Kidney (tissue), 22 donors: ENCODE measurements at regions of chr2 and their contacts with region 1.

Region 1: GRCh38 chr2:199985625-199986207 is 30.3 kb downstream of the MAIP1 start:
- DNase-seq: peak in 4 of 5 donors; percentile 49 to 82 (median 53)
- H3K4me3 ChIP-seq: no peak overlapping the region
- H3K27ac ChIP-seq: no peak overlapping the region
- H3K4me1 ChIP-seq: no peaks in the 10 kb centered on the region
- H3K27me3 ChIP-seq: no peaks in the 10 kb centered on the region
- CTCF ChIP-seq: peak; percentile 56

Region 2: DNA sequence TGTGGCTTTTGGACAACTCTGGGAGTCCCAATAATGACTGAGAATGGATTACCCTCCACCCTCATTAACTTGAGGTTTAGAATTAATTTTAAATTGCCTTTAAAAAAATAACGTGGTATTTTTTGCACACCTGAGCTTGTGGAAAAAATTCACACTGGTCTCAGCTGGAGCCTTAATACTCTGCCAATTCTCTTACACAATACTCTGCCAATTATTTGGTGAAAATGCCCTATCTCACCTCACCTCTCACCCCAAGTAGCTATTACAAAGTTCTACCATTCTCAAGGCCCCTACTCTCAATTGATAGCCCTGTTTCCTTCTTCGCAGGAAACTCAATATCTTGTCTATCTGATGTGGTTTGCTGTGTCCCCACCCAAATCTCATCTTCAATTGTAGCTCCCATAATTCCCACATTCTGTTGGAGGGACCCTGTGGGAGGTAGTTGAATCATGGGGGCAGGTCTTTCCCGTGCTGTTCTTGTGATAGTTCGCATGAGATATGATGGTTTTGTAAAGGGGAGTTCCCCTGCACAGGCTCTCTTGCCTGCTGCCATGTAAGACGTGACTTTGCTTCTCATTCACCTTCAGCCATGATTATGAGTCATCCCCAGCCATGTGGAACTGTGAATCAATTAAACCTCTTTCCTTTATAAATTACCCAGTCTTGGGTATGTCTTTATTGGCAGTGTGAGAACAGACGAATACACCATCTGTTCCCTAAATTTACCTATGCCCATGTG is 102.1 kb before region 1 on chr2:
- intact Hi-C with region 1: no loop called
- DNase-seq: no peak
- H3K4me3 ChIP-seq: no peak overlapping the region
- H3K27ac ChIP-seq: no peak overlapping the region
- H3K4me1 ChIP-seq: no peaks in the 10 kb centered on the region
- H3K27me3 ChIP-seq: no peaks in the 10 kb centered on the region
- CTCF ChIP-seq: no peak

Region 3: DNA sequence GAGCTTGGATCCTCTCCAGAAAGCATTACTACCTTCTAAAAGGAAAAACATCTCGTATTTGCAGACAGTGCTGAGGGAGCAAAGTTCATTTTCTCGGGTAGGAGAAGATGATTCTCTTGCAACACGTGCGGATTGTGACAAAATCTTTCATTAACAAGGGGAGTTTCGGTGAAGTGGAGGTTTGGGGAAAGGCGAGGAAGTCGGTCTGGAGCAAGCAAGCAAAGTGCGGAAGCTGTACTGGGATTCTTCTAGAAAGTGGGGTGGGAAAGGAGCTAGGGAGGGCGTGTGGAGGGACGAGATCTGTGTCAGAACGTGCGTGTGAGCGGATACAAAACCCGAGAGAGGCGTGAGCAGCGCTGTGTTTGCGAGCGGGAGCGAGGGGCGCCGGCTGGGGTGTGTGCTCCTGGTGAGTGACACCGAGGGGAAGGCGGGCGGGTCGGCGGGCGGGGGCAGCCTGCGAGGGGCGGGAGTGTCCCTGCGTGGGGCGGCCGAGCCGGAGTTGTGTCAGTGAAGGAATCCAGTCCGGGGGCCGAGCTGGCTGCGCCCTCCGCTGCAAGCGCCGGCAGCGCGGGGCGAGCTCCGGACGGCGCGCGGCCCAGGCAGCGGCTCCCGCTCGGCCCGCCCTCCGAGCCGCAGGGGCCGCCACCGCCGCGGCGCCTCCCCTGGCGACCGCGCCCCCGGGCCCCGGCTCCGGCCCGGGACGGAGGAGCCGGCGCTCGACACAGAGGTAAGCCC is 320.6 kb after region 1 on chr2 and contains the start of gene SPATS2L:
- intact Hi-C with region 1: loop called (anchors 10 kb)
- DNase-seq: peak; percentile 83 to 94 (median 88)
- H3K4me3 ChIP-seq: peak within 1 kb of the TSS; percentile 78 to 86 (median 79)
- H3K27ac ChIP-seq: peak within 1 kb of the TSS; percentile 81 to 90
- H3K4me1 ChIP-seq: peaks cover 0 to 7% (median 5%) of the 10 kb centered on the region in 3 donors
- H3K27me3 ChIP-seq: no peaks in the 10 kb centered on the region
- CTCF ChIP-seq: no peak
- total RNA-seq, gene SPATS2L: 166 TPM

Region 4: DNA sequence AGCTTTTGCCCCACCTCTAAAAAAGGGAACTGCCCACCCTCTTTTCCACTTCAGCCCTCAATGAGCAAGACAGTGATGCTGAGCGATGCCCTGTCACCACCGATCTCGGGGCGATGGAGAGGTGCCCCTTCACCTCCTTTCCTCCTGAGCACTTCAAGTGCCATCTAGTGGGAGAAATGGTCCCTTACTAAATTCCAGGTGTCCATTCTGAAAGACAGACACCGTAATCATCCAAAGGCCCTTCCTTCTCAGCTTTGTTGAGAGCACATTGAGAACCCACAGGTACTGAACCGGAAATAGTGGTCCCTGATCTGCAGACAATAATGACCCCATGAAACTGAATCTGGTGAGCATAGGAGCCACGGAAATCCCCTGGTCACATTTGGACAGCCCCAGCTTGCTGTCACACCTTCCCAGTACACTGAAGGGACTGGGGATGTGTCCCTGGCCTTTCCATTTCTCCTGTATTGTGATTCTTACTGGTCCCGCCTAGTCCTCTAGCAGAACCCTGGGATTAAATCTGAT is 485.7 kb after region 1 on chr2:
- intact Hi-C with region 1: loop called (anchors 10 kb)
- DNase-seq: peak in 3 of 5 donors; percentile 26 to 59 (median 48)
- H3K4me3 ChIP-seq: no peak overlapping the region
- H3K27ac ChIP-seq: no peak overlapping the region
- H3K4me1 ChIP-seq: peaks cover 0 to 3% (median 0%) of the 10 kb centered on the region in 3 donors
- H3K27me3 ChIP-seq: no peaks in the 10 kb centered on the region
- CTCF ChIP-seq: peak; percentile 54